Activated CD8-positive, alpha-beta T cell treated with anti-CD3 and anti-CD28 coated beads, Interleukin-2, amount 10 ng/mL, durations not matched to agents 7 days and 5 days (primary cell): ENCODE measurements at regions of chr10 and their contacts with region 1.

Region 1: GRCh38 chr10:60237977-60238758 is 151.5 kb downstream of the ANK3 start:
- DNase-seq: peak; percentile 41
- ATAC-seq: peak; percentile 63
- H3K4me3 Mint-ChIP-seq: peak overlapping the region; percentile 54
- H3K27ac Mint-ChIP-seq: peak overlapping the region; percentile 62
- H3K4me1 Mint-ChIP-seq: peaks cover 25% of the 10 kb centered on the region
- H3K27me3 Mint-ChIP-seq: no peaks in the 10 kb centered on the region

Region 2: DNA sequence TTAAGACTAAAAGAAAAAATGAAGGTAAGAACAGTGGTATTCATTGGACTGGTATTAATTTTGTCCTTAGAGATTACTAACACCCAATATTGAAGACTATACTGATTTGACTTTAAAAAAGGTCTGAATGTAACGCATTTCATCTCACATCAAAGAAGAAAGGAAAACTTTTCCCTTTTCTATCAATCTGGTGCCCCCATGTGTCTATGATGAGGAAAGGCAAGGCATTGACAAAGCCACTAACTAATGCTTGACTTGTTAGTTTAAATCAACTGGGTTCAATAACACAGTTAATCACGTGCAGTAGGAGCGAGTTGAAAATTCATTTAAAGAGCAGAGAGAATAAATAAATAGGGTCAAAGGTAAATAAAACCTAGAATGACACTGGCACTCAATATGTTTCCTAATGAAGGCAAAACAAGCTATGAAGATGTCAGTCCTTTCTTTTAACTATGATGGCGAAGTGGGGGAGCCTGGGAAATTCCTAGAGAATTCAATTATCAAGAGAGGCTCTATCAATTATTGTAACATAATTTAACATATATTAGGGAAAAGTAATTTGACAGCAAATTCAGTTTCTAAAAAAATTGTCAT is 29.4 kb before region 1 on chr10:
- CTCF ChIA-PET with region 1: interaction called, 11 read pairs
- POLR2A ChIA-PET with region 1: no interaction called
- DNase-seq: no peak
- ATAC-seq: no peak
- H3K4me3 Mint-ChIP-seq: no peak overlapping the region
- H3K27ac Mint-ChIP-seq: no peak overlapping the region
- H3K4me1 Mint-ChIP-seq: peaks cover 32% of the 10 kb centered on the region
- H3K27me3 Mint-ChIP-seq: peaks cover 9% of the 10 kb centered on the region

Region 3: DNA sequence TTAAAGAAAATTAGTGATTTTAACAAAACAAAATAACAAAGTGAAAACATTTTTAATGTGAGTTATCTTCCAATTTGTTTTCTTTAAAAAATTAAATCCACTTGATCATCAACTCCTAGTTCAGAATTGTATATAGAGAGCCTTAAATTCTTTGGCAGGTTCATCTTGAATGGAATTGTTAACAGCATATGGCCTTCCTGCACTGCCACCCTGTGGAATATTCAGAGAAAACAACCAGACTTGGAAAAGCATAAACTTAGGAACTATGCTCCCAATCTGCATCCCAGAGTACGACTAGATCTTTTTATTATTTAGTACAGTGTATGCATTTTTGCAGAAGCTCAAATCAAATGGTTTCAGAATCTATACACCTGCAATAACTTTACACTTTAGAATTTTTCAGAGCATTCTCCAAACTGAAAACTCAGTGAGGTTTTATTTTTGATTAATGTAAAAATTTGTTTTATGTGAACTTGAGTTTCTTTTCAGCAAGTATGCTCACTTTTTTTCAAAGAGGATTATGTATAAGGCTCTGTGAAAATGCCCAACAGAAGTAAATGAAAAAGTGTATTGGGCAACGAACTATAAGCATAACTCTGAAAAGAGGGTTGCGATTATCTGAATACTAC is 196.4 kb after region 1 on chr10:
- CTCF ChIA-PET with region 1: interaction called, 11 read pairs
- POLR2A ChIA-PET with region 1: no interaction called
- DNase-seq: no peak
- ATAC-seq: no peak
- H3K4me3 Mint-ChIP-seq: no peak overlapping the region
- H3K27ac Mint-ChIP-seq: no peak overlapping the region
- H3K4me1 Mint-ChIP-seq: no peaks in the 10 kb centered on the region
- H3K27me3 Mint-ChIP-seq: no peaks in the 10 kb centered on the region

Region 4: GRCh38 chr10:60444494-60445064 is 206.4 kb after region 1 on chr10:
- CTCF ChIA-PET with region 1: interaction called, 17 read pairs
- POLR2A ChIA-PET with region 1: no interaction called
- DNase-seq: no peak
- ATAC-seq: no peak
- H3K4me3 Mint-ChIP-seq: no peak overlapping the region
- H3K27ac Mint-ChIP-seq: no peak overlapping the region
- H3K4me1 Mint-ChIP-seq: peaks cover 10% of the 10 kb centered on the region
- H3K27me3 Mint-ChIP-seq: peaks cover 2% of the 10 kb centered on the region